HepG2 (cell line): ENCODE measurements at regions of chr12 and their contacts with region 1.

Region 1: DNA sequence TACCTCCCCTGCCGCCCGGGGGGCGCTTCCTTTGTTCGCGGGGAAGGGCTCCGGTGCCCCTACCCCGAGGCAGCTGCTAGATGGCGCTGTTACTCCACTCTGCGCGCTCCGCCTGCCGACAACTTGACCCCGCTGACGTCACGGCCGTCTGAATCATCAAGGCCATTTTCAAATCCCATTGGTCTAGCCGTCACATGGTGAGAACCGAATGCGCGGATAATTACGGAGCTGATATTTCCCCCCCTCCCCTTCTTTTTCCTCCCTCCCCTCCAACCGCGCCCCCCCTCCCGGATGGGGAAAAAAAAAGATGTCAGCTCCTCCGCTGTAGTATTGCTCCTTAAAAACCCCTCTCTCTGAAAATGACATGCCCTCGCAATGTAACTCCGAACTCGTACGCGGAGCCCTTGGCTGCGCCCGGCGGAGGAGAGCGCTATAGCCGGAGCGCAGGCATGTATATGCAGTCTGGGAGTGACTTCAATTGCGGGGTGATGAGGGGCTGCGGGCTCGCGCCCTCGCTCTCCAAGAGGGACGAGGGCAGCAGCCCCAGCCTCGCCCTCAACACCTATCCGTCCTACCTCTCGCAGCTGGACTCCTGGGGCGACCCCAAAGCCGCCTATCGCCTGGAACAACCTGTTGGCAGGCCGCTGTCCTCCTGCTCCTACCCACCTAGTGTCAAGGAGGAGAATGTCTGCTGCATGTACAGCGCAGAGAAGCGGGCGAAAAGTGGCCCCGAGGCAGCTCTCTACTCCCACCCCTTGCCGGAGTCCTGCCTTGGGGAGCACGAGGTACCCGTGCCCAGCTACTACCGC is at the start of gene HOXC10:
- DNase-seq: peak; percentile 53
- ATAC-seq: peak; percentile 48
- H3K4me3 ChIP-seq: no peak within 1 kb of the TSS
- H3K27ac ChIP-seq: no peak within 1 kb of the TSS
- H3K4me1 ChIP-seq: peaks cover 35% of the 10 kb centered on the region
- H3K27me3 ChIP-seq: peaks cover 6 to 42% of the 10 kb centered on the region in 2 experiments; a peak in 4 of 5 replicates
- CTCF ChIP-seq: peak; percentile 80
- EP300 ChIP-seq: no peak
- POLR2A ChIP-seq: no peak
- RAD21 ChIP-seq: peak; percentile 76
- total RNA-seq, gene HOXC10: not detected in 2 replicates

Region 2: GRCh38 chr12:53766881-53767280 is 218.2 kb before region 1 on chr12:
- CTCF ChIA-PET with region 1: interaction called, 13 read pairs
- POLR2A ChIA-PET with region 1: no interaction called
- in situ Hi-C with region 1: no loop called
- intact Hi-C with region 1: loop called (anchors 2 kb)
- DNase-seq: no peak
- ATAC-seq: no peak
- H3K4me3 ChIP-seq: no peak overlapping the region
- H3K27ac ChIP-seq: no peak overlapping the region
- H3K4me1 ChIP-seq: no peaks in the 10 kb centered on the region
- H3K27me3 ChIP-seq: peaks cover 3 to 42% of the 10 kb centered on the region in 2 experiments; a peak in 3 of 5 replicates
- CTCF ChIP-seq: no peak
- EP300 ChIP-seq: no peak
- POLR2A ChIP-seq: no peak
- RAD21 ChIP-seq: no peak

Region 3: DNA sequence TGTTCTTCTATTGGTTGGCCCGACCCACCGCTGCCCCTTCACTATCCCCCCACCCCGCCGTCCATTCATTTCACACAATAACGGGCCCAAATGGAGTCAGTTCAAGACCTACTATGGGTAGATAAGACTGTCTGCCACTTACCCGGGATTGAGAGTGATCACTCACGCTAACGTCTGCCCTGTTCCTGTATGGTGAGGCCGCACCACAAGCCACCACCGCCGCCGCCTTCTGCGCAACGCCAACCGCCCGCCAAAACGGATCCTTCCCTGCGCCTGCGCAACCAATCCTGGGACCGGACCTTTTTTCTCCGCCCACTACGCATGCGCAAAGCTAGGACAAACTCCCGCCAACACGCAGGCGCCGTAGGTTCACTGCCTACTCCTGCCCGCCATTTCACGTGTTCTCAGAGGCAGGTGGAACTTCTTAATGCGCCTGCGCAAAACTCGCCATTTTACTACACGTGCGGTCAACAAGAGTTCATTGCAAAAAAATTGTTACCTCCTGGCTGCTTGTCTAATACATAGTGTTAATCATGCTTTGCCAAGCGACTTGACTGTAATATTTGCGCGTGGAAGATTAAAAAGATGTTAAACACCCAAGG is 294.9 kb after region 1 on chr12 and contains the start of gene CBX5:
- CTCF ChIA-PET with region 1: no interaction called
- POLR2A ChIA-PET with region 1: no interaction called
- in situ Hi-C with region 1: no loop called
- intact Hi-C with region 1: no loop called
- DNase-seq: peak; percentile 98
- ATAC-seq: peak; percentile 39
- H3K4me3 ChIP-seq: peak within 1 kb of the TSS; percentile 73 to 79 (median 76)
- H3K27ac ChIP-seq: peak within 1 kb of the TSS; percentile 96
- H3K4me1 ChIP-seq: peaks cover 64% of the 10 kb centered on the region
- H3K27me3 ChIP-seq: no peaks in the 10 kb centered on the region; a peak in 1 of 5 replicates
- CTCF ChIP-seq: no peak
- EP300 ChIP-seq: no peak
- POLR2A ChIP-seq: peak in 1 of 2 experiments; percentile 46; a peak in 2 of 4 replicates
- RAD21 ChIP-seq: 0 out of 2 replicates have a peak, but pooled peaks have one; percentile 19
- total RNA-seq, gene CBX5: 22.2 and 45.4 TPM in 2 replicates

Region 4: DNA sequence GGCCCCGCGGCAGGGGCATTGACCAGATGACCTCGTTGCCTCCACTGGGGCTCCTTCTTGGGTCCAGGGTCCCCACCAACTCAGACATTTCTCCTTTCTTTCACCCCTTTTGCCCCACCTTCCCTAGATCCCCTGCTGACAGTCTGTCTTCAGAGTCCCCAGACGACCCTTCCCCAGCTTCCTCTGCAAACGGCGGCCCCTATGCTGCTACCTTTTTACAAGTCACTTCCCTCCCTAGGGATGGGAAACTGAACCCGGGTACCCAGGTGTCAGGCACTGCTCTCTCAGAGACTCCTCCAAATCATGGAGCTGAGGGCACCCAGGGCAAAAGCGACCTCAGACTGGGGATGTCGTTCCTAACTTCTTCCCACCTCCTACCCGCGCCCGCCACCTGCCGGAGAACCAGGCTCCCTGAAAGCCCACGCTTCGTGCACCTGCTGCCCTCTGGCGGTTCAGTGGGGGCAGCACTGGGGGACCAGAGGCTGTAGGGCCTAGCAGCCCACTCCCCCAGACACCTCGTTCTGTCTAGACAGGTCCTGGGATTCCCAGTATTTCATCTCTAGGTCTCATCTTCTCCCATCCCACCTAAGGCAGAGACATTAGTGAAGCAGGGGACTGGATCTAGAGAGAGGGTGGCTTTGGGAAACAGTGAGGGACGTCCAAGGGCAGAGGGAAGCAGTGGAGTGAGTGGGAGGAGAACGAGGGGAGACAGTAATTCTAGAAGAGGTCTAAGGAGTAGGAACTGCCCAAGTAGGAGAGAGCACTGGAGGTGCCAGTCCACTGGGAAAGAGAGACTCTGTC is 394.5 kb after region 1 on chr12:
- CTCF ChIA-PET with region 1: no interaction called
- POLR2A ChIA-PET with region 1: no interaction called
- in situ Hi-C with region 1: loop called (anchors 10 kb)
- intact Hi-C with region 1: no loop called
- DNase-seq: peak; percentile 79
- ATAC-seq: peak; percentile 92
- H3K4me3 ChIP-seq: peak overlapping the region; percentile 38 to 71 (median 55)
- H3K27ac ChIP-seq: no peak overlapping the region
- H3K4me1 ChIP-seq: peaks cover 23% of the 10 kb centered on the region
- H3K27me3 ChIP-seq: peaks cover 0 to 21% of the 10 kb centered on the region in 2 experiments; a peak in 2 of 5 replicates
- CTCF ChIP-seq: peak; percentile 100
- EP300 ChIP-seq: no peak
- POLR2A ChIP-seq: no peak
- RAD21 ChIP-seq: peak; percentile 89